Heart right ventricle (tissue), 16 donors: ENCODE measurements at regions of chr5 and their contacts with region 1.

Region 1: DNA sequence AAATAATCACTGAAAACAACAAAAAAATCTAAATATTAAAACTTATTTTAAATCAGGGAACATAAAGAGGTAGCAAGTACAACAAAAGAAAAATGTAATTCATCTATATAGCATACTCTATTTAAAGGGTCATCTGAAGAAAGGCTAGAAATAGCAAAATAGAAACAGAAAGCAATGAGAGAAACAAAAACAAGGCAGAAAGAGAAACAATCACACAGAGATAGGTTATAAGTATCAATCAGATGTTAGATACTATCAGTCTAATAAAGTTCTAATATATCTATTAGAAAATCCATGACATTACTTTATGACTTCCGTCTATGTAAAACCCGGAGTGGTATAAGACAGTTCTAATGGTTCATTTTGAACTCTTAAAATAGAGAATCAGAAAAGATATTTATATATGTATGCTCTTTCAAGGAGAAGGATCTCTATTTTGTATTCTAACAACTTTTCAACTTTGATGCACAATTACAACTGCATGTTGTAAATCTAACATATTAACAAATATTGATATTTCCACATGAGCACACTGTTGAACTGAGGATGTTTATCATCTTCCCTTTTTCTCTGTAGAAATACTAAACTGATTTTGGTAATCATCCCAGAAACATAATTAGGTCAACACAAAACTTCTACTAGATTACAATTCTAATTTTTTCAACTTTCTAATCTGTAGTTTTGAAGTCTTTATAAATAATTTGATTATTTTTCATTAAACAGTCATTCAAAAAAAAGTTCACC is 15.8 kb downstream of the RICTOR start:
- DNase-seq: no peak
- ATAC-seq: no peak
- H3K4me3 ChIP-seq: peak overlapping the region in 8 of 10 donors; percentile 1 to 45 (median 28)
- H3K27ac ChIP-seq: peak overlapping the region in 5 of 10 donors; percentile 24 to 65 (median 37)
- H3K4me1 ChIP-seq: peaks cover 3 to 97% (median 78%) of the 10 kb centered on the region in 9 donors
- H3K27me3 ChIP-seq: no peaks in the 10 kb centered on the region
- CTCF ChIP-seq: no peak

Region 2: DNA sequence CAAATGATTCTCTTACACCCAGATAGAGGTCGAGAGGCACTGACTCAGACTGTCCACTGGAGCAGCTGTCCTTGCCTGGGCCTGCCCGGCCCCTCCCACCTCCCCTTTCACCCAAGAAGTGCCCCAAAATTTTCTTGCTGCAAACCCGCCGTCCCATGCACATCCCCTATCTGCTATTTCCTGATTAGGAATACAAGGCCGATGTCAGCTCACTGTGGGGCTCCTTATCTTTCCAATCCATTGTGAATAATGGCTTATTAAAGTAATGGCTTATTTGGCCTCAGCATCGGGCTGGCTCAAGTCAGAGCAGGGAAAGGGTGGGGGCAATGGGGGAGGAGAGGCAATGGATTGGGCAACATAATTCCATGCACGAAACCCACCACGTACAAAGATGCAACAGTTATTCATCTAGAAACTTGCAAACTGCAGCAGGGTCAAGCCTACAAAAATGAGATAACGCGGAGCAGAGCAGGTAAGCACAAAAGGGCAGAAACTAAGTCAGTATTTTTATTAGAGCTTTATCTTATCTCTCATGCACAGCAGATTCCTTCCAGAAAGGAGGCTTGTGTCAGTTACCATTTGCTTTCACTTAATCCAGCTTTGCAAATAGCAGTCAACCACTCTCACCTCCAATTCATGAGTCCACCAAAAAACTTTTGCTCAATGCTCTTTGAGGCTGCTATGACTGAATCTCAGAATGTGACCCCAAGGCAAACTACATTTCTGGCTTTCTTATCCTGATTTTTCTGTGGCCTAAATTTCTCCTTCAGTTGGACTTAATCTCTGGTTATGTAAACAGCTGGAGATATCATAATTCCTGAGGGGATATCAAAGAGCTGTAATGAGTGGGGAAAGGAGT is 350.8 kb before region 1 on chr5:
- intact Hi-C with region 1: no loop called
- DNase-seq: no peak
- ATAC-seq: peak in 7 of 8 donors; percentile 40 to 82 (median 59)
- H3K4me3 ChIP-seq: no peak overlapping the region
- H3K27ac ChIP-seq: peak overlapping the region in 1 of 10 donors; percentile 13
- H3K4me1 ChIP-seq: peaks cover 3 to 30% (median 12%) of the 10 kb centered on the region in 9 donors
- H3K27me3 ChIP-seq: no peaks in the 10 kb centered on the region
- CTCF ChIP-seq: no peak

Region 3: GRCh38 chr5:39024005-39024404 is 34.3 kb before region 1 on chr5:
- intact Hi-C with region 1: loop called in 1 of 10 experiments (anchors 5 kb)
- DNase-seq: peak in 1 of 2 donors; percentile 13
- ATAC-seq: peak; percentile 52 to 87 (median 81)
- H3K4me3 ChIP-seq: no peak overlapping the region
- H3K27ac ChIP-seq: peak overlapping the region in 4 of 10 donors; percentile 8 to 49 (median 30)
- H3K4me1 ChIP-seq: peaks cover 0 to 49% (median 40%) of the 10 kb centered on the region in 9 donors
- H3K27me3 ChIP-seq: no peaks in the 10 kb centered on the region
- CTCF ChIP-seq: peak in 2 of 9 donors; percentile 23 to 25

Region 4: GRCh38 chr5:39202597-39203274 is 144.4 kb after region 1 on chr5:
- intact Hi-C with region 1: no loop called
- DNase-seq: no peak
- ATAC-seq: peak in 4 of 8 donors; percentile 16 to 46 (median 40)
- H3K4me3 ChIP-seq: peak overlapping the region in 1 of 10 donors; percentile 48
- H3K27ac ChIP-seq: peak overlapping the region in 1 of 10 donors; percentile 81
- H3K4me1 ChIP-seq: peaks cover 0 to 78% (median 0%) of the 10 kb centered on the region in 9 donors
- H3K27me3 ChIP-seq: peaks cover 0 to 5% (median 0%) of the 10 kb centered on the region in 7 donors
- CTCF ChIP-seq: no peak

Region 5: GRCh38 chr5:39213447-39214207 is 155.3 kb after region 1 on chr5:
- intact Hi-C with region 1: no loop called
- DNase-seq: no peak
- ATAC-seq: no peak
- H3K4me3 ChIP-seq: peak overlapping the region in 1 of 10 donors; percentile 4
- H3K27ac ChIP-seq: peak overlapping the region in 1 of 10 donors; percentile 78
- H3K4me1 ChIP-seq: peaks cover 0 to 96% (median 0%) of the 10 kb centered on the region in 9 donors
- H3K27me3 ChIP-seq: peaks cover 0 to 4% (median 0%) of the 10 kb centered on the region in 7 donors
- CTCF ChIP-seq: no peak